Breast epithelium (tissue), 4 donors: ENCODE measurements at regions of chr20 and their contacts with region 1.

Region 1: DNA sequence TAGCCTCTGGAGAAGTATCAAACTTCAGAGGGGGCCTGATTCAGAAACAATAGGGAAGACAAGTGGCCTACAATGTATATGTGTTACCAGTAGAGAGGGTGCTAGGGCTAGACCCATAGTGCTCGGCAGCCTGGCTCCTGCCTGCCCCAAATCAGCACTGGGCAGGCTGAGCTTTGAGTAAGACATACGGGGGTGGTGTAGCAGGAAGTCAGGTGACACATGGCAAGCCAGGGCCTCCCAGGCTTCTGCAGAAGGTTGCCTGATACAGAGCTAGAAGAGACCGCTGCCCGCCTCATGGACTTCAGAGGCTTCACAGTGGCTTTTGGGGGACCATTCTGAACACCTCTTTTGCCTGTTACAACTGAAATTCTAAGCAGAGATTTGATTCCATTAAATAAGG is 43.4 kb downstream of the RALY start:
- DNase-seq: no peak
- H3K4me3 ChIP-seq: no peak overlapping the region
- H3K27ac ChIP-seq: no peak overlapping the region
- H3K4me1 ChIP-seq: no peaks in the 10 kb centered on the region
- H3K27me3 ChIP-seq: no peaks in the 10 kb centered on the region
- CTCF ChIP-seq: no peak
- POLR2A ChIP-seq: no peak

Region 2: GRCh38 chr20:33947709-33948295 is 89.3 kb before region 1 on chr20:
- intact Hi-C with region 1: loop called (anchors 5 kb)
- DNase-seq: no peak
- H3K4me3 ChIP-seq: no peak overlapping the region
- H3K27ac ChIP-seq: no peak overlapping the region
- H3K4me1 ChIP-seq: no peaks in the 10 kb centered on the region
- H3K27me3 ChIP-seq: no peaks in the 10 kb centered on the region
- CTCF ChIP-seq: no peak
- POLR2A ChIP-seq: no peak

Region 3: GRCh38 chr20:34074101-34074760 is 37.1 kb after region 1 on chr20:
- intact Hi-C with region 1: no loop called
- DNase-seq: no peak
- H3K4me3 ChIP-seq: no peak overlapping the region
- H3K27ac ChIP-seq: no peak overlapping the region
- H3K4me1 ChIP-seq: peaks cover 0 to 5% of the 10 kb centered on the region in 2 donors
- H3K27me3 ChIP-seq: no peaks in the 10 kb centered on the region
- CTCF ChIP-seq: no peak
- POLR2A ChIP-seq: no peak